ENCODE measurements at regions of chr19 and their contacts with region 1.

Region 1: DNA sequence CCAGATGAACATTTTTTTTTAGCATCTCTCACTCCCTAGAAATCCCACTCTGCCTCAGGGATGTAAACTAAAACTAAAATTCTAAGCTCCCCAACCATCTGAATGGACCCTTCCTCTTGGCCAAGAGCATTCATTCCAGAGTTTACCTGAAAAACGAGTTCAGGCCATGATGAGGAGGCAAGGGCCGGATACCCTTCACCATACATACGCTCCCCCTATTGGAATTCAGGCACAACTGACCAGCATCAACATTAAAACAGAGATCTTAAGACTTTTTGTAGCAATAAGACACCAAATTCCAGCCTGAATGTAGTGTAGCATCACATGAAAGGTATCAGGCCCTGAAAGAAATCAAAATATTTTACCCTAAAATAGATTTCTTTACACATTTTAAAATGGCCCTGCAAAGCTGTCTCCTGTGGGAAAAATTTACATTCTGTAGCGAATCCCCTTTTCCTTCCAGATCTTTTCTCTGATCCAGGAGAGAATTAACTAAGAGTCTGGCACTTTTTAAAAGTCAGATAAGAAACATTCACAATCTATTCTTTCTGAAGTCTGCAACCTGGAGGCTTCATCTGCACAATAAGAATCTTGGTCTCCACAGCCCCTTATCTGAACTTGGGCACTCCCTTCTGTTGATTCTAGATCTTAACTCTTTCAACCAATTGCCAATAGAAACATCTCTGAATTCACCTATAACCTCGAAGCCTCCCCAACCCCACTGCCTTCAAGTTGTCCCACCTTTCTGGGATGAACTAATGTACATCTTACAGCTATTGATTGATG is 888.5 kb downstream of the UQCRFS1 start:
- DNase-seq: no peak
- ATAC-seq: no peak
- H3K4me3 ChIP-seq: no peak overlapping the region
- H3K27ac ChIP-seq: no peak overlapping the region
- H3K4me1 ChIP-seq: no peaks in the 10 kb centered on the region
- H3K27me3 ChIP-seq: no peaks in the 10 kb centered on the region
- CTCF ChIP-seq: no peak

Region 2: GRCh38 chr19:27974082-27974513 is 350.4 kb before region 1 on chr19:
- intact Hi-C with region 1: loop called in 2 of 3 experiments (anchors 5 kb)
- DNase-seq: peak in 4 of 6 donors; percentile 23 to 56 (median 45)
- ATAC-seq: peak; percentile 71 to 96 (median 88)
- H3K4me3 ChIP-seq: no peak overlapping the region
- H3K27ac ChIP-seq: no peak overlapping the region
- H3K4me1 ChIP-seq: no peaks in the 10 kb centered on the region
- H3K27me3 ChIP-seq: no peaks in the 10 kb centered on the region
- CTCF ChIP-seq: peak; percentile 24 to 61 (median 54)

Region 3: GRCh38 chr19:28196961-28197360 is 127.5 kb before region 1 on chr19:
- intact Hi-C with region 1: no loop called
- DNase-seq: no peak
- ATAC-seq: no peak
- H3K4me3 ChIP-seq: no peak overlapping the region
- H3K27ac ChIP-seq: no peak overlapping the region
- H3K4me1 ChIP-seq: no peaks in the 10 kb centered on the region
- H3K27me3 ChIP-seq: no peaks in the 10 kb centered on the region
- CTCF ChIP-seq: no peak